ENCODE measurements at regions of chr16 and their contacts with region 1.

Region 1: DNA sequence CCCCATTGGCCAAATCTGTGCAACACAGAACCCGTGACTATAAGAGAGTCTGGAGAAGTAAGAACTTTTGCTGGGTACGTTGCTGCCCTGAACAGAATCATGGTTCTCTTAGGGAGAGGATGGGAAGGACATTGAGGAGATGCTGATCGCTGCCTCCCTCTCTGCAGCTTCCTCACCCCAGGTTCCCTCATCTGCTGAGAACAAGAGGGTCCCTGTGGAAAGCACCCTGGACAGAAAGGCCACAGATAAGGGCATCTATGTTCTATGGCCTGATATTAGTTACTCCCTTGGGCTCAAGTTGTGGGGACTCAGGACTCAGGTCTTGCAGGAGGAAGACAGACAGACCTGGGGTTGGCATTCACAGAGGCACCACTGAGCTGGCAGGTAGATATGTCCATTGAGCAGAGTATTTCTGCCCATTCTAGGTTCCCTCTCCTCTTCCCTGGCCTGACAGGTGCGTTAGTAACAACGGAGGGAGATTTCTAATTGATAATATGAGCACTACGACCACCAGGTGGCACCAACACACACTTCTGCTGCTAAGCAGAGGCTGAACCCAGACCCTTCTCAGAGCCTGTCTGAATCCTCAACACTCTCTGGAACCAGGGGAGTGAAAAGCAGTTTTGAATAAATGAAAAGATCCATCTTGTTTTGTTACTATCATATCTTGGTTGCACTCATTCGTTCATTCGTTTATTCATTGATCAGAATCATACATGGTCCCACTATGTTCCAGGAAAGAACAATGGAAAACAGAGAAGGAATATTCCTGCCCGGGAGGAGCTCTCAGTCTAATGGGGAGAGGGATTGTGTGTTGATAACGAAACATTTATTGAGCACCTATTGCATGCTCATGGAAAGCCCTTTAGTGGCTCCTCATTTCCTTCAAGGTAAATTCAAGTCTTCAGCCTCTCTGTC is 56.4 kb downstream of the SLC6A2 start:
- DNase-seq: peak; percentile 57 to 90 (median 78)
- H3K4me3 ChIP-seq: no peak overlapping the region
- H3K27ac ChIP-seq: no peak overlapping the region
- H3K4me1 ChIP-seq: no peaks in the 10 kb centered on the region
- H3K27me3 ChIP-seq: peaks cover 4% of the 10 kb centered on the region
- CTCF ChIP-seq: peak; percentile 44 to 75 (median 70)
- POLR2A ChIP-seq: no peak

Region 2: DNA sequence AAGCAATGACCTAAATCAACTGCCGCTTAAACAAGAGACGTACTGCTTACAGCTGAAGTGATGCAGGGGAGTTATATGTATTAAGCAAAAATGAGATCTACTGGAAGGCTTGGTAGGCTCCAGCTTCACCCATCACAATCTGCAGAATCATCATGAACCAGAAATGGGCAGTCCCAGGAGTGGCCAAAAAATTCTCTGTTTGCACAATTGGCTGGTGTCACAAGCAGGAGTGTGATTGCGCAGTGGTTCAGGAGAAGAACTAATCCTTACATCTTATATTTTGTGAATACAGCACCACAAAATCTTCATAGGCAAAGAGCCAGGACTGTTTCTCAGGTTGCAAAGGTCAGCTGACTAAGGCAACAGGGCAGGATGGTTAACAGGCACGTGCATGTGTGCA is 44.7 kb after region 1 on chr16:
- intact Hi-C with region 1: no loop called
- DNase-seq: no peak
- H3K4me3 ChIP-seq: no peak overlapping the region
- H3K27ac ChIP-seq: no peak overlapping the region
- H3K4me1 ChIP-seq: no peaks in the 10 kb centered on the region
- H3K27me3 ChIP-seq: no peaks in the 10 kb centered on the region
- CTCF ChIP-seq: no peak
- POLR2A ChIP-seq: no peak

Region 3: DNA sequence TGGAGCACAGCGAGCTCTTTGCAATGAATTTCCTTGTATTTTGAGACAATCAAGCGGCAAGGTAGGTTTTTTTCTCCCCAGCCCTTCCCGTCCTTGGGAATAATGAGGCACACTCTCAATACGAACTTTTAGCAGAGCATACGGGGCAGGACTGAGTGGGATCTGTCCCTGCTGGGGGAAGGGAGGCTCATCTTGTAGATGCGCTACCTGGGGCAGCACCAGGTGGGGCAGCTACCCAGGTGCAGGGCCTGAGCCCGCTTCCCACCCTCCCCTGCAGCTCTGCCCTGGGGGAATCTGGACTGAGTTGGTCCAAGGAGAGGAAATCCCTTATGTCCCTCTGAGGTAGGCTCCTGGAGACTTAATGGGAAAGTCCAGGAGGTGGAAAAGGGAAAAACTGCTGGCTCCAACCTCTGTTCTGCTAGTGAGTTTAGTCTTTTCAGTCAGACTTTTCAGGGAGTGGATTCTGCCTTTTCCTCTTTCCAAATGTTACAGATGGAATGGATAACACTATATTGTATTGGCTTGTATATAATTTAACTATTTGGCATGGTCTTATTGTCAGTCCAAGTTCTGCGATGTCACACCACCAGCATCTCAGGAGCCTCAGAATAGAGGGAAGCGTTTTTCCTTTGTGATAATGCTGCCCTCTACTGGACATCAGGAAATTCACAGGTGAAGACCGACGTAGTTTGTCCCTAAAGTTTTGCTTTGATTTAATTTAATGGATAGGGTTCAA is 130.3 kb after region 1 on chr16:
- intact Hi-C with region 1: loop called (anchors 2 to 5 kb)
- DNase-seq: peak in 6 of 7 donors; percentile 19 to 56 (median 31)
- H3K4me3 ChIP-seq: no peak overlapping the region
- H3K27ac ChIP-seq: no peak overlapping the region
- H3K4me1 ChIP-seq: no peaks in the 10 kb centered on the region
- H3K27me3 ChIP-seq: peaks cover 11% of the 10 kb centered on the region
- CTCF ChIP-seq: peak; percentile 63 to 87 (median 82)
- POLR2A ChIP-seq: no peak